ENCODE measurements at regions of chr10 and their contacts with region 1.

Region 1: DNA sequence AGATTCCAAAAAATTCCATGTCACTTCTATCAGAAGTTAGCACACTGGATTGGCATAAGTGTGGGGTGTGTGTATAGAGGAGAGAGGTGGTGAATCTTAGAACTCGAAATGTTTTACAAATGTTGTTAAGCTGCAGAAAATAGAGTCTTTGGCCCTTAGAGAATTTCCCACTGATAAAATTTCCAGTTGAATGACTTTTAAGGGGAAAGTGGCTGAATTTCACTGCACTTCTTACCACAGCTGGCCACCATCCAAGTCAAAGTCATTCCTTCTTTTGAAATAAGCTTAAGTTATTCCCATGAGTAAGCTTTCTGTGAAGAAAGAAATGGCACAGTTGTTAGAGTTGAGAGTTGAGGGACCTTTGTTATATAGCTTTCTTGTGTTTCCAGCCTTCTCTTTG is 13.9 kb downstream of the VCL start:
- DNase-seq: no peak
- ATAC-seq: no peak
- H3K4me3 ChIP-seq: no peak overlapping the region
- H3K27ac ChIP-seq: no peak overlapping the region
- H3K4me1 ChIP-seq: peaks cover 27% of the 10 kb centered on the region
- H3K27me3 ChIP-seq: no peaks in the 10 kb centered on the region; a peak in 1 of 4 replicates
- CTCF ChIP-seq: no peak
- EP300 ChIP-seq: no peak
- POLR2A ChIP-seq: no peak
- RAD21 ChIP-seq: no peak

Region 2: DNA sequence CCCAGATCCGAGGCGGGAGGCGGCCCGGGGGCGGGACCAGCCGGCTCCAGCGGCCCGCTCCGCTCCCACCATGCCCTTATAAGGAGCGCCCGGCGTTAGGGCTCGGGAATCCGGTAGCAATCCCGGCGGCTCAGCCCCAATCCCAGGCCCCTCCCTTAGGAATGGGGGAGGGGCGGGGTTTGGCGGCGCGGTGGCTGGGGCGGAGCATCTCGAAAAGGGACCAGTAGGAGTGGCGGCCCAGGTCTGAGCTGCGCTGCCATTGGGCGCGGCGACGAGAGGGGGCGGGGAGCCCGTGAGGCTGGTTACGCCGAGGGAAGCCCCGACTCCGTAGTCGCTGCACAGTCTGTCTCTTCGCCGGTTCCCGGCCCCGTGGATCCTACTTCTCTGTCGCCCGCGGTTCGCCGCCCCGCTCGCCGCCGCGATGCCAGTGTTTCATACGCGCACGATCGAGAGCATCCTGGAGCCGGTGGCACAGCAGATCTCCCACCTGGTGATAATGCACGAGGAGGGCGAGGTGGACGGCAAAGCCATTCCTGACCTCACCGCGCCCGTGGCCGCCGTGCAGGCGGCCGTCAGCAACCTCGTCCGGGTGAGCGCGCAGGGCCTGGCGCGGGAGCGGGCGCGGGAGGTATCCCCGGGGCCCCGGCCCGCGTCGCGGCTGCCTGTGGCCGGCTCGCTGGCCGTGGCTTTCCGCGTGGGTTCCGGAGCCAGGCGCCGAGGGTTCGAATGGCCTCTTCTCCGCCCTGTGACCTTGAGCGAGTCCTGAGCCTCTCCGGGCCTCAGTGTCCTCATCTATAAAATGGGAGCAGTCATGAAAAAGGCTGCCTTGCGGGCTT is 13.8 kb before region 1 on chr10 and contains the start of gene VCL:
- CTCF ChIA-PET with region 1: interaction called, 5 read pairs
- POLR2A ChIA-PET with region 1: interaction called, 5 read pairs
- RAD21 ChIA-PET with region 1: interaction called, 4 read pairs
- SMC1A ChIA-PET with region 1: interaction called, 22 read pairs
- in situ Hi-C with region 1: no loop called
- intact Hi-C with region 1: no loop called
- DNase-seq: peak; percentile 64
- ATAC-seq: peak; percentile 99
- H3K4me3 ChIP-seq: peak within 1 kb of the TSS; percentile 86
- H3K27ac ChIP-seq: peak within 1 kb of the TSS; percentile 67
- H3K4me1 ChIP-seq: peaks cover 15% of the 10 kb centered on the region
- H3K27me3 ChIP-seq: no peaks in the 10 kb centered on the region
- CTCF ChIP-seq: no peak
- EP300 ChIP-seq: no peak
- POLR2A ChIP-seq: peak; percentile 92
- RAD21 ChIP-seq: no peak
- polyA plus RNA-seq, gene VCL: 6.7 to 9.2 TPM

Measured in GM12878 (cell line).